ENCODE measurements at regions of chr1 and their contacts with region 1.

Region 1: DNA sequence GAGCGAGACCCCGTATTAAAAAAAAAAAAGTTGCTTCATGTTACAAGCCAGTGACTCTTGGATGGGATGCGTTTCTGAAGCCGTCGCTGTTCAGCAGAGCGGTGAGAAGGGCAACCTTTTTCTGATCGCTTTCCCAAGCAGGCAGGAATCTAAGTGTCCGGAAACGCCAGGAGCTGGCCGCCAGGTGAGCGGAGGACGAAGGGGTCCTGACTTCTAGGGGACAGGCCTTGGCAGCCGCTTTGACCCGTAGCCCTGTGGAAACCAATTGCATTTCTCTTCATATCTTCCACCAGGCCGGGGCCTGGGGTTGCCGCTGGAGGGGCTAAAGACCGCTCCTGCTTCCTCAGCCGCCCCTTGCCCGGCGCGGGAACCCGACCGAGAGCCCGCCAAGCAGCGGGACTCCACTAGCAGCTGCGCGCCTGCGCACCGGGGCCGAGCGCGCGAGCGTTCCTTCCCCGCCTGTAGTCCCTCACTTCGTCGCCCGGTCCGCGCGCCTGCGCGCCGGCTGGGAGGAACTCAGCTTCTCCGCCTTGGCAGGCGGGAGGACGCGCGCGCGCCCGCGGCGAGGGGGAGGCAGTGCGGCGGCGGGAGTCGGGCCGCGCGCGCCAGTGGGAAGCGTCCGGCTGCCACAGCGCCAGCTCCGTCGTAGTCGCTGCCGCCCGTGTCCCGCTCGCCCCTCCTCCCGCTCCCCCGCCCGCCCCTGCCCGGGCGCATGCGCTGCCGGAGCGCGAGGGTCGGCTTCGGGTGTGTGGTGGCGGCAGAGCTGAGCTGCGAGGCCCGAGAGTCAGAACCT is at the start of gene SPEN:
- DNase-seq: peak; percentile 97
- H3K4me3 ChIP-seq: peak within 1 kb of the TSS; percentile 85
- H3K27ac ChIP-seq: peak within 1 kb of the TSS; percentile 97
- H3K4me1 ChIP-seq: peaks cover 8% of the 10 kb centered on the region
- H3K27me3 ChIP-seq: no peaks in the 10 kb centered on the region
- CTCF ChIP-seq: no peak
- total RNA-seq, gene SPEN: 40.9 to 42.5 TPM

Region 2: GRCh38 chr1:15885701-15886610 is 38.7 kb after region 1 on chr1:
- intact Hi-C with region 1: loop called (anchors 5 kb)
- DNase-seq: peak; percentile 99
- H3K4me3 ChIP-seq: peak overlapping the region; percentile 28
- H3K27ac ChIP-seq: peak overlapping the region; percentile 79
- H3K4me1 ChIP-seq: peaks cover 9% of the 10 kb centered on the region
- H3K27me3 ChIP-seq: no peaks in the 10 kb centered on the region
- CTCF ChIP-seq: no peak